Activated CD8-positive, alpha-beta T cell treated with anti-CD3 and anti-CD28 coated beads, Interleukin-2, amount 10 ng/mL, durations not matched to agents 7 days and 5 days (primary cell): ENCODE measurements at regions of chr4 and their contacts with region 1.

Region 1: GRCh38 chr4:56435306-56435926 is at the start of gene PPAT:
- DNase-seq: peak; percentile 98
- ATAC-seq: peak; percentile 83
- H3K4me3 Mint-ChIP-seq: peak within 1 kb of the TSS; percentile 87
- H3K27ac Mint-ChIP-seq: peak within 1 kb of the TSS; percentile 92
- H3K4me1 Mint-ChIP-seq: peaks cover 53% of the 10 kb centered on the region
- H3K27me3 Mint-ChIP-seq: no peaks in the 10 kb centered on the region
- total RNA-seq, gene PPAT: 29.0 to 32.5 TPM

Region 2: GRCh38 chr4:56387023-56388001 is 48.1 kb before region 1 on chr4 and contains the start of gene AASDH:
- CTCF ChIA-PET with region 1: interaction called, 9 read pairs
- POLR2A ChIA-PET with region 1: interaction called, 59 read pairs
- DNase-seq: peak; percentile 96
- ATAC-seq: peak; percentile 95
- H3K4me3 Mint-ChIP-seq: peak within 1 kb of the TSS; percentile 94
- H3K27ac Mint-ChIP-seq: peak within 1 kb of the TSS; percentile 97
- H3K4me1 Mint-ChIP-seq: peaks cover 36% of the 10 kb centered on the region
- H3K27me3 Mint-ChIP-seq: no peaks in the 10 kb centered on the region
- total RNA-seq, gene AASDH: 8.5 to 9.9 TPM

Region 3: GRCh38 chr4:56450342-56450741 is 14.9 kb after region 1 on chr4:
- CTCF ChIA-PET with region 1: interaction called, 11 read pairs
- POLR2A ChIA-PET with region 1: interaction called, 8 read pairs
- DNase-seq: no peak
- ATAC-seq: no peak
- H3K4me3 Mint-ChIP-seq: no peak overlapping the region
- H3K27ac Mint-ChIP-seq: no peak overlapping the region
- H3K4me1 Mint-ChIP-seq: peaks cover 8% of the 10 kb centered on the region
- H3K27me3 Mint-ChIP-seq: no peaks in the 10 kb centered on the region

Region 4: GRCh38 chr4:56467284-56468096 is 32.1 kb after region 1 on chr4 and contains the start of gene SRP72:
- CTCF ChIA-PET with region 1: interaction called, 7 read pairs
- POLR2A ChIA-PET with region 1: interaction called, 33 read pairs
- DNase-seq: peak; percentile 94
- ATAC-seq: peak; percentile 94
- H3K4me3 Mint-ChIP-seq: peak within 1 kb of the TSS; percentile 100
- H3K27ac Mint-ChIP-seq: peak within 1 kb of the TSS; percentile 100
- H3K4me1 Mint-ChIP-seq: peaks cover 41% of the 10 kb centered on the region
- H3K27me3 Mint-ChIP-seq: no peaks in the 10 kb centered on the region
- total RNA-seq, gene SRP72: 131 to 132 TPM

Region 5: GRCh38 chr4:56513517-56513916 is 78.1 kb after region 1 on chr4:
- CTCF ChIA-PET with region 1: no interaction called
- POLR2A ChIA-PET with region 1: no interaction called
- DNase-seq: no peak
- ATAC-seq: no peak
- H3K4me3 Mint-ChIP-seq: no peak overlapping the region
- H3K27ac Mint-ChIP-seq: no peak overlapping the region
- H3K4me1 Mint-ChIP-seq: no peaks in the 10 kb centered on the region
- H3K27me3 Mint-ChIP-seq: peaks cover 15% of the 10 kb centered on the region

Region 6: DNA sequence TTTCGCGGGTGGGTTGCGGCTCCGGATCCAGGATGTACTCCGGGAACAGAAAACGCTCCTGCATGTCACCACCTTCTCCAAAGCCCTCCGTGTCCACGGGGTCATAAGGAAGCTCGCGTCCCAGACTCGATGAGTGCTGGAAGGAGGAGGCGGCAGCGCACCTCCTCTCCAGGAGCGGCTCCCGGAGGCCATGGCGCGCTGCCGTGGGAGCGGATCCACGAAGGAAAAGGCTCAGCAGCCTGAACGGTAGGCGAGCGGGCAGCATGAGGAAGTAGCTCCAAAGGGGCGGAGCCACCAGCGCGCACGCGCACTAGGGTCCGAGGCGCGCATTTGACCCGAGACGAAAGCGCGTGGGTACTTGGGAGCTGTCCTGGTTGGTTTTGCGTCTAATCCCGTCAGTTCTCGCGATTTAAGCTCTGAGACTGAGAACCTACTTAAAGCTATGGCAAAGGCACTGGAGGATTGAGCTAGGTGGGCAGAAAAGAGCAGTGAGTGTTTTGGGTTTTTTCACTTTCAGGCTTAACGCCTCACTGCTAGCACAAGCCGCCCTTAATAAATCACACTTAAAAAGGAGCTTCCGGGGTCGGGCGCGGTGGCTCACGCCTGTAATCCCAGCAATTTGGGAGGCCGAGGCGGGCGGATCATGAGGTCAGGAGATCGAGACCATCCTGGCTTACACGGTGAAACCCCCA is 542.1 kb after region 1 on chr4 and contains the start of gene NOA1:
- CTCF ChIA-PET with region 1: interaction called, 5 read pairs
- POLR2A ChIA-PET with region 1: interaction called, 21 read pairs
- DNase-seq: peak; percentile 98
- ATAC-seq: peak; percentile 87
- H3K4me3 Mint-ChIP-seq: peak within 1 kb of the TSS; percentile 92
- H3K27ac Mint-ChIP-seq: peak within 1 kb of the TSS; percentile 97
- H3K4me1 Mint-ChIP-seq: peaks cover 45% of the 10 kb centered on the region
- H3K27me3 Mint-ChIP-seq: no peaks in the 10 kb centered on the region
- total RNA-seq, gene NOA1: 19.1 to 21.9 TPM